ENCODE measurements at regions of chr10 and their contacts with region 1.

Region 1: DNA sequence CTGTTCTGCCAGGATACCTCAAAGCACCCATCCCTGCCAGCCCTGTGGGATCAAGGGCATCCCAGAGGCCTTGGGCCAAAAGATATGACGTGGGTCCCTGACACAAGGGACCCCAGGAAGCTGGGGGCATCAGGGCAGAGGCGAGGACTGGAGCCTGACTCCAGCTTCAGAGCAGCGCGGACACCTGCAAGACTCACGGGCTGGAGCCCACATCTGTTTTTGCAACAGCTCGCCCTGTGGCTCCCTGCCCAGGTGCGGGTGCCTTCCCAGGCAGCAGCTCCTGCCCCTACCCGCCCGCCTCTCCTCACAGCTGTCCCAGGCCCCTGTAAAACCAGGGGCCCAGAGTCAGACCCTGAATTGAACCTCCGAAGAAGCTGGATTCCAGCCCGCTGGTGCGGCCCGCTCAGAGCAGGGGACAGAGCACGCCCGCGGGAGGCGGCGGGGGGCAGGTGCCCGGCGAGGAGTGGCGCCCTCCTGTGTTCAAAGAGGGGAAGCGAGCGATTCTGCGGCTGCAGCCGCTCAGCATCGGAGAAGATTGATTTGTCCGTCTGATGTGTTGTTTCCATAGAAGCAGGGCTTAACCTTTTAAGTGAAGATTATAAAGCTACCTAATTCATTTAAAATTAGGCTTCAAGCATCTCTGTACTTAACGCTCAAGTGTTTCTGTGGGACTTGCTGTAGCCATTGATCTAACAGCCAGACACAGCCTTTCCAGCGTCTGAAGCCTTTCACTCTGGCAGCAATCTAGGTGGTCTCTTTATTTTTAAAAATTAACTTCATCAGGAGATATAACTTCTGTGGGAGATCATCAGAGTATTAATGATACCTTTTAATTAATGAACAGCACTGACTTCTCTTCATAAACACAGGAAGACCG is 88.4 kb downstream of the BEND7 start:
- DNase-seq: peak; percentile 55
- H3K4me3 ChIP-seq: peak overlapping the region; percentile 21
- H3K27ac ChIP-seq: no peak overlapping the region
- H3K4me1 ChIP-seq: no peaks in the 10 kb centered on the region
- CTCF ChIP-seq: peak; percentile 92

Region 2: DNA sequence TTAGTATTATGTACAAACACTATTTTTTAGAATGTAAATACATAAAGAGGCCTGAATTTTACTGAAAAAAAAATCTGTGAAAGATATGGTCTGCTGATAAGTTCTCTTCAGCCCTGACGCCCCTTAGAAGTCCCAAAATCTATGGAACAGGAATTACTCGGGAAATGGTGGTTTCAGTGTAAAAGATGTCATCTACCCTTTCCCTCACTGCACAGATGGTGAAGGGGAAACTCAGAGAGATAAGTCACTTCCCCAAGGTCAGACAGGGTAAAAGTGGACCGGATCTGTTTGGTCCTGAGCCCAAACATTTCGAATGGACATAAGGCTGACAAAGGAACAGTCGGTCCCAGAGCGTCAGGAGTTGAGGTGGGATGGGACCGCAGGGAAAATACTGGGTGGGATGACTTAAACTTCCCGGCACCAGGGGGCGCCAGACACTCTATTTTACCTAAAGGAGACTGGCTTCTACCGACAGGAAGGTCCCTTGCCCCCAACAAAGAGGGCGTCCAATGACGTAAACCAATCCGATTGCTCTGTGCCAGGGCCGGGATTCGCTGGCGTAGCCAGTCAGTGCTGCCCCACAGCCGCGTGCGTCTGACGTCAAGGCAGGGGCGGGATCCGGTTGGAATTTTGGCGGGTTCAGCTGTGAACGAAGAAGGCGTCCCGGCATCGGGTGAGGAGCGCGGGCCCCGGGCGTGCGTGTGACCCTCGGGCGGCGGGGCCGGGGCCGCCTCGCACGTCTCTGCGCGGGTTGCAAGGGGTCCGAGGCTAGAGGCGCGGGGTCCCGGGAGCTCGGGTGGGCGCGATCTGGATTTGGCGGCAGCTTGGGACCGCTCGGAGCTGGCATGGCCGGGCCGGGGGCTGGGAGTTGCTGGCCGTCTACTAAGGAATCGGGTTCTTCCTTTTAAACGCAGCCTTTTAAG is 279.2 kb before region 1 on chr10 and contains the start of gene MCM10:
- CTCF ChIA-PET with region 1: interaction called, 3 read pairs
- POLR2A ChIA-PET with region 1: no interaction called
- intact Hi-C with region 1: loop called (anchors 2 kb)
- DNase-seq: peak; percentile 100
- H3K4me3 ChIP-seq: peak within 1 kb of the TSS; percentile 80
- H3K27ac ChIP-seq: peak within 1 kb of the TSS; percentile 24
- H3K4me1 ChIP-seq: peaks cover 30% of the 10 kb centered on the region
- CTCF ChIP-seq: peak; percentile 90
- total RNA-seq, gene MCM10: 56.9 and 63.9 TPM in 2 replicates

Region 3: DNA sequence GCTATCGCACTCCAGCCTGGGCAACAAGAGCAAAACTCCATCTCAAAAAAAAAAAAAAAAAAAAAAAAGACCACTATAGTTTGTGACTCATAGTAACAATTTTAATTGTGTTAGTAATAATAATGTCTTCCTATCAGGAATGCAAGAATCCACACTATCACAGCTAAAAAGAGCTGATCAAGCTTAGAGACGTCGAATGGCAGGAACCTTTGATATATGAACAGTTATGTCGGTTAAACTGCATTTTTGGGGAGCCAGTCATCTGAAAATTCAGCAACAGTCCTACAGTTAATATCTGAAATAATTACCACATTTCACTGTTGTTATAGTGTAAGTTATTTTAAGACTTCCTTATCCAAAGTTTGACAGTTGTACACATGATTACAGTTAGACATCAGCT is 149.4 kb before region 1 on chr10:
- CTCF ChIA-PET with region 1: no interaction called
- POLR2A ChIA-PET with region 1: no interaction called
- intact Hi-C with region 1: no loop called
- DNase-seq: no peak
- H3K4me3 ChIP-seq: no peak overlapping the region
- H3K27ac ChIP-seq: no peak overlapping the region
- H3K4me1 ChIP-seq: peaks cover 6% of the 10 kb centered on the region
- CTCF ChIP-seq: no peak

Region 4: GRCh38 chr10:13404791-13405190 is 35.6 kb before region 1 on chr10:
- CTCF ChIA-PET with region 1: no interaction called
- POLR2A ChIA-PET with region 1: interaction called, 3 read pairs
- intact Hi-C with region 1: loop called (anchors 5 kb)
- DNase-seq: no peak
- H3K4me3 ChIP-seq: no peak overlapping the region
- H3K27ac ChIP-seq: no peak overlapping the region
- H3K4me1 ChIP-seq: no peaks in the 10 kb centered on the region
- CTCF ChIP-seq: no peak

Region 5: DNA sequence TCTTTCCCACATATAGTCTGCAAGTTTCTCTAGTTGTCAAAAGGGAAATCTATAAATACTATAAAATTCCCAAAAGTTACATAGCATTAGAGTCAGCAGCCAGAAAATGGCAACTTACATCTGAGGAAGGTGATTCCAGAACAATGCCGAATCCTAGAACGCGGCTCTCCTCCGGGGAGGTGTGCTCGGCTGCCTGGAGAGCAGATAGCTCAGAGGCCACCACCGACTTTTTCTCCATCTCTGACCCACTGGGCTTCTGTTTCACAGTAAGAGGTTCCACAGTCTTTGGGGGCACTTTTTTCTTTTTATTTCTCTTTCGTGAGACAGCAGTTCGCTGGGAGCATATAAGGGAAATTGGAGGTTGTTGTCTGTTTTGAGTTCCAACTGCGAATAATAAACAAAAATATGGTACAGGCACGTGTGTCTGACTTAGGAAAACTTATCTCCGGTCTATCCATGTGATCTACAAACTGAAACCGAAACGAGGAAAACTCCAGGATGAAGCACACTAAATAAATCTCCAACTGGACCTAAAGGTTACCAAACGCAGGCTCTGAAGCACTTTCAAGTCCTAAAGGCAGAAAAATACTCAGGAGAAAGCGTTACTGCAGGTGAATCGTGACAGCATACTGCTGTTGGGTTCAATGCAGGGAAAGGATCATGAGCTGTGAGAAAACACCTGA is 52.2 kb after region 1 on chr10:
- CTCF ChIA-PET with region 1: no interaction called
- POLR2A ChIA-PET with region 1: no interaction called
- intact Hi-C with region 1: no loop called
- DNase-seq: no peak
- H3K4me3 ChIP-seq: no peak overlapping the region
- H3K27ac ChIP-seq: no peak overlapping the region
- H3K4me1 ChIP-seq: no peaks in the 10 kb centered on the region
- CTCF ChIP-seq: no peak

Measured in OCI-LY7 (cell line).